ENCODE measurements at regions of chr10 and their contacts with region 1.

Region 1: DNA sequence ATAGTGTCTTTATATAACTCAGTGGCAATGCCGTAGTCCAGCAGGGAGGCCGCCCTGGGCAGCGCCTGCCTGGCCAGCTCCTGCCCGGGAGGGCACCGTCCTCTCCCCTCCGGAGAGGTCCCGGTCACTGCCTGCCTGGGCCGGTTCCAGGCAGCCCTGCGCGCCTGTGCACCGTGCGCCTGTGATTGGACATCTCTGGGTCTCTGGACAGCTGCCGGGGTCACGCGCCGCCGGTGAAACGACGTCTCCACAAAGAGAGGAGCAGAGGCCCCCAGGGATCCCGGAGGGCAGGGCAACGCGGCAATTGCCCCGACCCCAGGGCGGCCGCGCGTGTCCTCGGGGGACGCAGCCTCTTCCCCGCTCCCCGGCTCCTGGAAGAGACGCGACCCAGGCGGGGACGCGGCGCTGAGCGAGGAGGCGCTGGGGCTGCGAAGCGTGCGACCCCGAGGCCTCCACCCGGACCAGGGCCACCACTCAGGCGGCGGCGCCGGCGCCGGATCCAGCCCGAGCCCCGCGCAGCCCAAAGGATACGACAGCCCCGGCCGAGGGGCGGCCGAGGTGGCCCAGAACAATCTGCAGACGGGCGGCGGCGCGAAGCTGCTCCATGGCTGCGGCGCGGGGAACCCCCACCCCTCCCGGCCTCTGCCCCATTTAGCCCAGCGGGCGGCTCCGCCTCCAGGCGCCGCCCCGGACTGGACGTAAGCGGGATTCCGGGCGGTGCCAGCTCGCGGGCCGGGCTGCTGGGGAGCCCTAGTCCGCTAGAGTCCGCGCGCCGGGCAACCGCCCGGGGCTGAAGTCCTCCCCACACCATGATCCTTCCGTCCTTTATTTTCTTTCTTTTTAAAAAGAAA is at the start of gene PHYH:
- DNase-seq: peak; percentile 78 to 94 (median 90)
- H3K4me3 ChIP-seq: peak within 1 kb of the TSS; percentile 57 to 96 (median 83)
- H3K27ac ChIP-seq: peak within 1 kb of the TSS; percentile 87 to 100 (median 97)
- H3K27me3 ChIP-seq: no peaks in the 10 kb centered on the region
- CTCF ChIP-seq: peak in 37 of 56 donors; percentile 8 to 61 (median 30)
- total RNA-seq, gene PHYH: 19.2 to 43.7 (median 30.0) TPM

Region 2: GRCh38 chr10:13038391-13038790 is 261.3 kb before region 1 on chr10:
- intact Hi-C with region 1: no loop called
- DNase-seq: no peak
- H3K4me3 ChIP-seq: no peak overlapping the region
- H3K27ac ChIP-seq: no peak overlapping the region
- H3K27me3 ChIP-seq: no peaks in the 10 kb centered on the region
- CTCF ChIP-seq: no peak

Region 3: GRCh38 chr10:13099666-13100348 is 199.9 kb before region 1 on chr10 and contains the start of gene OPTN:
- intact Hi-C with region 1: loop called (anchors 10 kb)
- DNase-seq: peak; percentile 62 to 87 (median 74)
- H3K4me3 ChIP-seq: peak within 1 kb of the TSS; percentile 75 to 99 (median 93)
- H3K27ac ChIP-seq: peak within 1 kb of the TSS; percentile 84 to 99 (median 96)
- H3K27me3 ChIP-seq: no peaks in the 10 kb centered on the region
- CTCF ChIP-seq: peak in 55 of 56 donors; percentile 48 to 79 (median 67)
- total RNA-seq, gene OPTN: 84.3 to 188 (median 136) TPM

Region 4: GRCh38 chr10:13206546-13207443 is 92.9 kb before region 1 on chr10:
- intact Hi-C with region 1: loop called in 1 of 2 experiments (anchors 5 kb)
- DNase-seq: no peak
- H3K4me3 ChIP-seq: no peak overlapping the region
- H3K27ac ChIP-seq: no peak overlapping the region
- H3K27me3 ChIP-seq: no peaks in the 10 kb centered on the region
- CTCF ChIP-seq: peak; percentile 35 to 73 (median 54)

Region 5: GRCh38 chr10:13271552-13272163 is 28.0 kb before region 1 on chr10:
- intact Hi-C with region 1: loop called in 1 of 2 experiments (anchors 1 kb)
- DNase-seq: peak in 7 of 10 donors; percentile 9 to 53 (median 45)
- H3K4me3 ChIP-seq: peak overlapping the region in 34 of 59 donors; percentile 4 to 47 (median 30)
- H3K27ac ChIP-seq: peak overlapping the region in 26 of 59 donors; percentile 1 to 74 (median 38)
- H3K27me3 ChIP-seq: no peaks in the 10 kb centered on the region
- CTCF ChIP-seq: peak in 37 of 56 donors; percentile 11 to 53 (median 36)